ENCODE measurements at regions of chr9 and their contacts with region 1.

Region 1: DNA sequence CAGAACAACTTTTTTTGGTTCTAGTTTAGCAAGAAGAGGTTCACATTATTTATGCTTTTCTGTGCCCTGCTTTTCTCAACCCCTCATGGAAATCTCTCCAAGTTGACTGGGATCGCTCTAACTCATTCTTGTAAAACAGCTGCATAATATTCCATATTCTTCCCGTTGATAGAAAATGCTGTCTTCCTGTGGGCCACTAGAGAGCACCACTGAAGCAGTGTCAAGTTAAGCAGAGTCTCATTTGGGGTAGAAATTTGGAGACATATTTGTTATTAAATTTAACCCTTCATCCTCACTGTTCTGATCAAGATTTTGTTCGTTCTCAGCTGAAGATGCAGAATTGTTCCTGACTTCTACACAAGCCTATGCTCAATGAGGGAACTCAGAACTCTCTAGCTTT is 140.1 kb downstream of the CEMIP2 start:
- DNase-seq: no peak
- H3K4me3 Mint-ChIP-seq: no peak overlapping the region
- H3K27ac Mint-ChIP-seq: no peak overlapping the region
- H3K4me1 Mint-ChIP-seq: peaks cover 16% of the 10 kb centered on the region
- H3K27me3 Mint-ChIP-seq: peaks cover 10% of the 10 kb centered on the region

Region 2: DNA sequence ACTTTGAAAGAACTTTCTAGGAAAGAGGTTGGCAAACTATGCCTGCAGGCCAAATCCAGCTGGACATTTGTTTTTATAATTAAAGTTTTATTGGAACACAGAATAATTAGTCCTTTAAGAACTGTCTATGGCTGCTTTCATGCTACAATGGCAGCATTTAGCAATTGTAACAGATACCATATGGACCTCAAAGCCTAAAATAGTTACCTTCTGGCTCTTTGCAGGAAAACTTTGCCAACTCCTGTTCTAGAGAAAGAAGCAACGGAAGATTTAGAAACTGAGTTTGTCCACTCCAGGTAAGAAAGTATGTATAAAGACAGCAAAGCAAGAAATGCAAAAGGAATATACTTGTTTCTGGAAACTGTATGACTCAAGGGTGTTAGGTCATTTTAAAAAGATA is 225.1 kb before region 1 on chr9:
- intact Hi-C with region 1: no loop called
- DNase-seq: no peak
- H3K4me3 Mint-ChIP-seq: no peak overlapping the region
- H3K27ac Mint-ChIP-seq: no peak overlapping the region
- H3K4me1 Mint-ChIP-seq: no peaks in the 10 kb centered on the region
- H3K27me3 Mint-ChIP-seq: no peaks in the 10 kb centered on the region

Region 3: DNA sequence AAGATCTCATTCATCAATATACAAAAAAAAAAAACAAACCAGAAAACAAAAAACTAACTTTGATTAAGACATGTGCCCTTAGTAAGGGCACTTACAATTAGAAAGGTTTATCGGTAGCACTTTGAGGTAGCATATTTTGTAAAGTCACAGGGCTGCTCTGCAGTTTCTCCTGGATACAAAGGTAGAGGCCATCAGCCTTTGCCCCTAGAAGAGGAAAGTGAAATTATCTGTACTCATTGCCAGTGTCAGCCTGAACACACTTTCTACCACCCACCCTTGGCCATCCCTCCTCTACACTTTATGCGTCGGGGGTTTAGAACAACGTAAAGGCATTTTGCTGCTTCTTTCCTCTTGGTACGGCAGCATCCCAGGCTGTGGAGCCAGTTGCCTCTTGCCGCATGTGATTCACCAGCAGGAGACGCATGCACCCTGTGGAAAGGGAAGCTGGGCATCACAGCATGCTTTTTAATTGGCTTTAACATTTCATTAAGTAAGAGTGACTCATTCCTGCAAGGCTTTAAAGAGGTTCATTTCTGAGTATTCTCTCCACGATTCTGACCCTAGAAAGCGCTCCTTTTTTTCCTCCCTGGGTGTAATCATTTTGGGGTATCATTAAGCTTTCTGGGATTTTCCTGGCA is 55.5 kb after region 1 on chr9:
- intact Hi-C with region 1: loop called (anchors 10 kb)
- DNase-seq: no peak
- H3K4me3 Mint-ChIP-seq: peak overlapping the region; percentile 65
- H3K27ac Mint-ChIP-seq: peak overlapping the region; percentile 69
- H3K4me1 Mint-ChIP-seq: peaks cover 30% of the 10 kb centered on the region
- H3K27me3 Mint-ChIP-seq: no peaks in the 10 kb centered on the region

Measured in activated CD4-positive, alpha-beta T cell treated with anti-CD3 and anti-CD28 coated beads, Interleukin-2, amount 10 ng/mL, durations not matched to agents 24 days and 14 days (primary cell).